MCF 10A (cell line): ENCODE measurements at regions of chr7 and their contacts with region 1.

Region 1: DNA sequence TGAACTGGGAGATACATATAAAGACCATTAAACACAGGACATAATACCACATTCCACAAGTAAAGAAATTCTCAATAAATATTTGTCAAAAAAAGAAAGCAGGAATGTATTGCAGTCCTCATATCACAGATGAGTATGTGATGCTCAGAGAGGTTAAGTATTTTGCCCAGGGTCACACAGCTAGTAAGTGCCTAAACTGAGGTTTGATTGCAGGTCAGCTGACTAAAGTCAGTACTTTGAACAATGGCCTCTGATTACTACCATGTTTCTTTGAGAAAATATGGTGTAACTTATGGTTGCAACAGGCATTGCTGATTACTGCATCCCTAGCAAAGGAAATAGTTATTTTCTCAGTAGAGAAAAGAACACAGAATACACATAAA is 267.1 kb downstream of the ELMO1 start:
- DNase-seq: no peak
- H3K4me3 Mint-ChIP-seq: no peak overlapping the region
- H3K27ac Mint-ChIP-seq: no peak overlapping the region
- H3K4me1 Mint-ChIP-seq: no peaks in the 10 kb centered on the region
- H3K27me3 Mint-ChIP-seq: peaks cover 10% of the 10 kb centered on the region
- CTCF ChIP-seq: no peak

Region 2: GRCh38 chr7:36473454-36474282 is 707.9 kb before region 1 on chr7:
- CTCF ChIA-PET with region 1: interaction called, 5 read pairs
- POLR2A ChIA-PET with region 1: interaction called, 4 read pairs
- intact Hi-C with region 1: loop called (anchors 5 kb)
- DNase-seq: peak; percentile 91
- H3K4me3 Mint-ChIP-seq: peak overlapping the region; percentile 20
- H3K27ac Mint-ChIP-seq: peak overlapping the region; percentile 14
- H3K4me1 Mint-ChIP-seq: peaks cover 19% of the 10 kb centered on the region
- H3K27me3 Mint-ChIP-seq: no peaks in the 10 kb centered on the region
- CTCF ChIP-seq: peak; percentile 39

Region 3: DNA sequence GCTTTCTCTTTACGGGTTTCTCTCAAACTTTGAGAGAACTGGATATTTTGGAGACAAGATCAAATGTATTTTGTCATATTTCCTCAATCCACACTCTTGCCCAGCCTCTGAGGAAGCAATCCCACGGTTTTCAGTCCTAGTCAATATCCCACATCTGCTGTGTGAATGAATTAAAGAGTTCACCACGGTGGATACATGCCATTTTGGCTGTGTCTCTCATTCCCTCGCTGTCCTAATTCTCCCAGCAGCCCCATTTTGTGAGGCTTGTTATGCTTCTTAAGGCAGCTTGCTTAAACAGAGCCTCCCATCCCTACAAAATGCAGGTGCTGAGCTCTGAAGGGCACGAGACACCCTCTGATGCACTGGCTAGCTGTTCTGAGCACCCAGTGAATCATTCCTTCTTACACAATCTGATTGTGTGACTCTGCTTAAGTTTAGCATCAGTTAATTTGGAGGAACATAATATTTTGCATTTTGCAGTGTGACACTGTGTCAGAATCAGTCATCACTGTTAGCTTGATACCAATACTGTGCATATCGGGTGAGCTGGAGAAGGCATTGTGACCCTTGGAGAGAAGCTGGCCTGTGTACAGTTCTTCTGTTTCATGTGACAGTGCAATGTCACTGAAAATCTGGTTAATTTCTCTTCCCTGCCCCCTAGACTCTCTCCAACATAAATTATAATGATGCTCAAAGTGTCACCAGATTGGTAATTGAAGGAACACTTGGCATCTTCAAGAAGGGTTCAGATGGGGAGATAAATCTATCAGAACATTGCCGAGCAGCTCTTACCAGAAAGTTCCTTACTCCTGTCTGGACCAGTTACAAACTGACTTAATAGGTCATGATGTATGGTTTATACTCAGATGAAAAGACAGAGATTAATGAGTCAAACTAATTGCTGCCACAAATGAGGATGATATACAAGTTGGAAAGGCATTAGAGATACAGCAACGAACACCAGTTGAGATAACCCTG is 353.5 kb before region 1 on chr7:
- CTCF ChIA-PET with region 1: interaction called, 12 read pairs
- POLR2A ChIA-PET with region 1: no interaction called
- intact Hi-C with region 1: no loop called
- DNase-seq: peak; percentile 48
- H3K4me3 Mint-ChIP-seq: no peak overlapping the region
- H3K27ac Mint-ChIP-seq: no peak overlapping the region
- H3K4me1 Mint-ChIP-seq: peaks cover 9% of the 10 kb centered on the region
- H3K27me3 Mint-ChIP-seq: no peaks in the 10 kb centered on the region
- CTCF ChIP-seq: no peak

Region 4: GRCh38 chr7:36986429-36987362 is 194.8 kb before region 1 on chr7:
- CTCF ChIA-PET with region 1: interaction called, 101 read pairs
- POLR2A ChIA-PET with region 1: no interaction called
- intact Hi-C with region 1: loop called (anchors 1 kb)
- DNase-seq: peak; percentile 62
- H3K4me3 Mint-ChIP-seq: no peak overlapping the region
- H3K27ac Mint-ChIP-seq: no peak overlapping the region
- H3K4me1 Mint-ChIP-seq: no peaks in the 10 kb centered on the region
- H3K27me3 Mint-ChIP-seq: peaks cover 73% of the 10 kb centered on the region
- CTCF ChIP-seq: peak; percentile 84

Region 5: DNA sequence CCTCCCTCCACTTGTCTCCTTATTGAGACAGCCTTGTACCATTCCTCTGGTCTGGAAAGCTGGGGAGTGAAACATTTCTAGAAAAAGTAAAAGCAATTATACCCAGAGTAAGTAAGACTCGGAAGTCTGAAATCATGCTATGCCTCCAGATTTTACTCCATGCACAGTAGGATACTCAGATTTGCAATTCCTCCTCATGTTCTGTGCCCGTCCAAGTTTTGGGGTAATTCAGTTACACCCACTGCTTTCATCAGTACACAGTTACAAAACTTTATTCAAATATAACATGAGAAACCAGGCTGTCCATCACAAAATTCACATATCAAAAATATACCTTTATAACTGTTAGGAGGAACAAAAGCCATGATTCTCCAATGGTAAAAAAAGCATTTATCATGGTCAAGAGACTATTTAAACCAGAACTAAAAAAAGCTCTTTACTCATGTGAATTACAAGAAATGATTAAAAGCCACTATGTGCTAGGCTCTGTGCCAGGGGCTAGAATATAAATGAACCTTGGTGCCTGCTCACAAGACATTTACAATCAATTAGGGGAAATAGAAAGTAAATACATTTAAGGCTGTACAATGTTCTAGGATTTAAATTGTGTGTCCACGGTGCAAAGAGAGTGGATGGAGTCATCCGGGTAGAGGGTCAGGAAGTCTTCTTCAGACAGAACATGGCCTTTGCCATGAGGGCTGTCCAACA is 53.1 kb before region 1 on chr7:
- CTCF ChIA-PET with region 1: no interaction called
- POLR2A ChIA-PET with region 1: no interaction called
- intact Hi-C with region 1: no loop called
- DNase-seq: no peak
- H3K4me3 Mint-ChIP-seq: no peak overlapping the region
- H3K27ac Mint-ChIP-seq: no peak overlapping the region
- H3K4me1 Mint-ChIP-seq: no peaks in the 10 kb centered on the region
- H3K27me3 Mint-ChIP-seq: peaks cover 15% of the 10 kb centered on the region
- CTCF ChIP-seq: no peak

Region 6: GRCh38 chr7:37141742-37142141 is 39.8 kb before region 1 on chr7:
- CTCF ChIA-PET with region 1: interaction called, 10 read pairs
- POLR2A ChIA-PET with region 1: no interaction called
- intact Hi-C with region 1: no loop called
- DNase-seq: no peak
- H3K4me3 Mint-ChIP-seq: no peak overlapping the region
- H3K27ac Mint-ChIP-seq: no peak overlapping the region
- H3K4me1 Mint-ChIP-seq: peaks cover 8% of the 10 kb centered on the region
- H3K27me3 Mint-ChIP-seq: no peaks in the 10 kb centered on the region
- CTCF ChIP-seq: peak; percentile 9

Region 7: GRCh38 chr7:37208528-37208927 is 27.0 kb after region 1 on chr7:
- CTCF ChIA-PET with region 1: interaction called, 13 read pairs
- POLR2A ChIA-PET with region 1: no interaction called
- intact Hi-C with region 1: no loop called
- DNase-seq: peak; percentile 87
- H3K4me3 Mint-ChIP-seq: no peak overlapping the region
- H3K27ac Mint-ChIP-seq: no peak overlapping the region
- H3K4me1 Mint-ChIP-seq: peaks cover 16% of the 10 kb centered on the region
- H3K27me3 Mint-ChIP-seq: no peaks in the 10 kb centered on the region
- CTCF ChIP-seq: peak; percentile 49